Pancreas (tissue), 10 donors: ENCODE measurements at regions of chr10 and their contacts with region 1.

Region 1: DNA sequence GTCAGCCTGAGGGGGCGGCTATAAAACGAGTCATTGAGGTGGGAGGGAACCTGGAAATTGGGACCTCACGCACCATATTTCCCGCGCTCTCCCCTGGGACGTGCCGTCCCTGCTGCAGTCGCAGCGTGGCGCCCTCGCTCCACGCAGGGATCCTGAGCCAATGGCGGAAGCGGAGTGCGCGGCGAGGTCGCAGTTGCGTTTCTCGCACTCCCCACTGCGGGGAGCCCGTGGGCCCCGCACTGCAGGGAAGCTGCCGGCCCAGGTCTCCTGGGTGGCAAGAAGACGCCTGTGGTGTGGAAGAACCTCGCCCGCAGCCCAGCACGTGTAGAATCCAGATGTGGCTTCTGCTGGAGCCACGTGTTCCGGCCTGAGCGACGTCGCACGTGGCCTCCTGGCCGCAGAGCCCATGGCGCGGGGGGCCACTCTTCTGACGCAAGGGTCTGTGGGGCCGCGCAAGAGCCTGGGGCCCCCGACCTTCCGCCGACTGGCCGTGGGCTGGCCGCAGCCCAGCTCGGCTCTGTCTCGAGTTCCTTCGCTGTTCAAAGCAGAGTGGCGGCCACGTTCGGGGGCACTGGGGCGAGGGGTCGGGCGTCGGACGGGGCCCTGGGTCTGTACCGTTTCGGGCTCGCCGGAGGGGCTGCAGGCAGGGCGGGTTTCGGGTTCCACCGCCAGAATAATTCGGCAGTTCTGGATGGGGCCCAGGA is 26.4 kb downstream of the HIF1AN start:
- DNase-seq: peak; percentile 65 to 91 (median 85)
- ATAC-seq: peak; percentile 95 to 99 (median 98)
- H3K4me3 ChIP-seq: peak overlapping the region in 2 of 4 donors; percentile 1 to 18
- H3K27ac ChIP-seq: no peak overlapping the region
- H3K4me1 ChIP-seq: peaks cover 0 to 10% (median 0%) of the 10 kb centered on the region in 3 donors
- H3K27me3 ChIP-seq: peaks cover 0 to 9% (median 0%) of the 10 kb centered on the region in 4 donors
- CTCF ChIP-seq: peak; percentile 86 to 95 (median 88)

Region 2: DNA sequence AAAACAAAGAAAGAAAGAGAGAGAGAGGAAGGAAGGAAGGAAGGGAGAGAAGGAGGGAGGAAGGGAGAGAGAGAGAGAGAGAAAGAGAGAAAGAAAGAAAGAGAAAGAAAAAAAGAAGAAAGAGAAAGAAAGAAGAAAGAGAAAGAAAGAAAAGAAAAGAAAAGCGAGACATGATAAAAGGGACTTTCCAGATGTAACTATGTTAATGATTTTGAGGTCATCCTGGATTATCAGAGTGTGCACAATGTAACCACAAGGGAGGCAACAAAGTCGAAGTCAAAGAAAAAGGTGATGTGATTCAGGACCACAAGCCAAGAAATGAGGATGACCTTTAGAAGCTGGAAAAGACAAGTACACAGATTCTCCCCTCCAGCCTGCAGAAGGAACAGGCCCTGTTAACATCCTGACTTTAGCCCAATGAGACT is 134.3 kb after region 1 on chr10:
- intact Hi-C with region 1: no loop called
- DNase-seq: no peak
- ATAC-seq: no peak
- H3K4me3 ChIP-seq: no peak overlapping the region
- H3K27ac ChIP-seq: no peak overlapping the region
- H3K4me1 ChIP-seq: no peaks in the 10 kb centered on the region
- H3K27me3 ChIP-seq: no peaks in the 10 kb centered on the region
- CTCF ChIP-seq: no peak

Region 3: GRCh38 chr10:100743626-100744135 is 181.5 kb after region 1 on chr10:
- intact Hi-C with region 1: loop called in 2 of 3 experiments (anchors 5 to 10 kb)
- DNase-seq: peak in 2 of 6 donors; percentile 33 to 53
- ATAC-seq: peak; percentile 74 to 84 (median 78)
- H3K4me3 ChIP-seq: no peak overlapping the region
- H3K27ac ChIP-seq: no peak overlapping the region
- H3K4me1 ChIP-seq: peaks cover 5 to 30% (median 5%) of the 10 kb centered on the region in 3 donors
- H3K27me3 ChIP-seq: peaks cover 0 to 52% (median 22%) of the 10 kb centered on the region in 4 donors
- CTCF ChIP-seq: peak; percentile 25 to 51 (median 42)

Region 4: DNA sequence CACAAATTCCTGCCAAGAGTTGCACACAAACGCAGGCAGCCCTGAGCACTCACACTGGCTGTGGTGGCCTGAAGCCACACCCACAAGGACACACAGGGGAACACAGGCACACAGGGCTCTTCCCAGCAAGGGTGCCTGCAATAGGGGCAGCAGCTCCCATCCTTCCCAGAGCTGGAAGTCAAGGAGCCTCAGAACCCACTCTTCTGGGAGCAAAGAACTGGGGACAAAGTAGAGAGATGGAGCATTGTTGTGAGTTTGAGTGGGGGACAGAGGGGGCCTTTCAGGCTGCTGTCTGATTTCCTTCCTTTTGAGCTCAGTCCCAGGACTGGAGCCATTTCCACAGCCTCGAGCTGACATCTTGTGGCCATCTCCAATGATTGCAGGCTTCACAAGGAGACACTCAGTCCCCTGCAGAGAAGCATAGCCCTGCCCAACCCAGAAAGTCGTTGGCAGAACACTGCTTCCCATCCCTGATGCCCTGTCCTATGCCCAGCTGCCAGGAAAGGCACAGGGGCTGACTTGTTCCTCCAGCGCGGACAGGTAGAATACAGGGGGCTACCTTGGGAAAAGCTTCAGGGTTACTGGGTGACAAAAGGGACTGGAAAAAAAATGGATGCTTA is 316.2 kb after region 1 on chr10:
- intact Hi-C with region 1: loop called in 2 of 3 experiments (anchors 5 to 10 kb)
- DNase-seq: peak in 2 of 6 donors; percentile 13 to 47
- ATAC-seq: peak; percentile 58 to 93 (median 88)
- H3K4me3 ChIP-seq: no peak overlapping the region
- H3K27ac ChIP-seq: no peak overlapping the region
- H3K4me1 ChIP-seq: no peaks in the 10 kb centered on the region
- H3K27me3 ChIP-seq: peaks cover 0 to 2% (median 0%) of the 10 kb centered on the region in 4 donors
- CTCF ChIP-seq: peak in 3 of 4 donors; percentile 18 to 28 (median 22)